ENCODE measurements at regions of chr5 and their contacts with region 1.

Region 1: DNA sequence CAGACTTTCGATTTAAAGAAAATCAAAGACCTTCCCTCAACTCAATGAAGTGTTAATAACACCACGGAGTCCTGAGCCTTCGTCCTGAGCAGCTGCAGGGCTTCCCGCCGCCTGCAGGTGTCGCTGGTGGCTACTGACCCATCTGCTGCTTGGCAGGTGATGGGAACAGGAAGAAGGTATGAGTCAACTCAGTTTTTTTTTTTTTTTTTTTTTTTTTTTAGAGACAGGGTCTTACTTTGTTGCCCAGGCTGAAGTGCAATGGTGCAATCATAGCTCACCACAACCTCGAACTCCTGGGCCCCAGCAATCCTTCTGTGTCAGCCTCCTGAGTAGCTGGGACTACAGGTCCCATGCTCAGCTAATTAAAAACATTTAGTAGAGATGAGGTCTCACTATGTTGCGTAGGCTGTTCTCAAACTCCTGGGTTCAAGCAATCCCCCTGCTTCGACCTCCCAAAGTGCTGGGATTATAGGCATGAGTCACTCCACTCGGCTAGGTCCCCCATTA is 185.7 kb upstream of the IL12B start:
- DNase-seq: peak; percentile 52 to 83 (median 78)
- ATAC-seq: peak; percentile 29 to 77
- H3K4me3 ChIP-seq: no peak overlapping the region
- H3K27ac ChIP-seq: no peak overlapping the region
- H3K4me1 ChIP-seq: peaks cover 2% of the 10 kb centered on the region
- H3K27me3 ChIP-seq: no peaks in the 10 kb centered on the region

Region 2: DNA sequence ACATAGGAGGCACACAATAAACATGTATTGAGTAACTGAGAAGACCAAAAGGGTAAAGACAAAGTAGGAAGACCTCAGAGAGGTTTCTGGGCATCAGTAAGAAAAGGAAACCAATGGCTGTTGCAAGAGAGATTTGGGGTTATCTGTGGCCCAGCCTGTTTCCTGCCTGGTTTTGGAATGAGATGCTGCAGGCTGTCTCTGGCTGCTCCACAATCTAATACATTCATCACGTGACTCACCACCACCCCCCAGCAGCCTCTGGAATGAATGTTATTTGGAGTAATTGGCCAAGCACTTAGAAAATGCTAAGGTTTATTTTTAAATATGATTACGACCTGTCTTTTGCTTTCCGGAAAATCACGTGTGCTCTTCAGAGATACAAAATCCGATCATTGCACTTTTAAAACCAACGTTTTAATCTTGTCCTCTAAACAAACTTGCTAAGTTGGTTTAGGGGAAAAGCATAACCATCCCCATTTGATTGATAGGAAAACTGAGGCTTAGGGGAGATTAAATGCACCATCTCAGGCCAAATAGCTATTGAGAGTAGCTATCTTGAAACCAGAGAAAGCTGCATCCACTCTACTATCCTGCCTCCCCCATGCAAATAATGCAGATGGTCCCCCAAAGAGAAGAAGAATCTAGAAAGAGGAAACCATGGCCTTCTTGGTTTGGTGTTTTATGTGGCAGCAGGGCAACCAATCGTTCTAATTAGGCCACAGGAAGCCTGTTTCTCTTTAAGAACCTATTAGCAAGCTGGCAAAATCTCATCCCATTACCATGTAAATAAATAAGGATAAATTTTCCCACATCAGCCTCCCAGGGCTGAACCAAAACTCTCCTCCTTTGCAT is 248.5 kb after region 1 on chr5:
- intact Hi-C with region 1: loop called in 1 of 4 experiments (anchors 10 kb)
- DNase-seq: peak in 1 of 3 donors; percentile 56
- ATAC-seq: peak; percentile 79 to 84
- H3K4me3 ChIP-seq: no peak overlapping the region
- H3K27ac ChIP-seq: no peak overlapping the region
- H3K4me1 ChIP-seq: no peaks in the 10 kb centered on the region
- H3K27me3 ChIP-seq: no peaks in the 10 kb centered on the region

Region 3: DNA sequence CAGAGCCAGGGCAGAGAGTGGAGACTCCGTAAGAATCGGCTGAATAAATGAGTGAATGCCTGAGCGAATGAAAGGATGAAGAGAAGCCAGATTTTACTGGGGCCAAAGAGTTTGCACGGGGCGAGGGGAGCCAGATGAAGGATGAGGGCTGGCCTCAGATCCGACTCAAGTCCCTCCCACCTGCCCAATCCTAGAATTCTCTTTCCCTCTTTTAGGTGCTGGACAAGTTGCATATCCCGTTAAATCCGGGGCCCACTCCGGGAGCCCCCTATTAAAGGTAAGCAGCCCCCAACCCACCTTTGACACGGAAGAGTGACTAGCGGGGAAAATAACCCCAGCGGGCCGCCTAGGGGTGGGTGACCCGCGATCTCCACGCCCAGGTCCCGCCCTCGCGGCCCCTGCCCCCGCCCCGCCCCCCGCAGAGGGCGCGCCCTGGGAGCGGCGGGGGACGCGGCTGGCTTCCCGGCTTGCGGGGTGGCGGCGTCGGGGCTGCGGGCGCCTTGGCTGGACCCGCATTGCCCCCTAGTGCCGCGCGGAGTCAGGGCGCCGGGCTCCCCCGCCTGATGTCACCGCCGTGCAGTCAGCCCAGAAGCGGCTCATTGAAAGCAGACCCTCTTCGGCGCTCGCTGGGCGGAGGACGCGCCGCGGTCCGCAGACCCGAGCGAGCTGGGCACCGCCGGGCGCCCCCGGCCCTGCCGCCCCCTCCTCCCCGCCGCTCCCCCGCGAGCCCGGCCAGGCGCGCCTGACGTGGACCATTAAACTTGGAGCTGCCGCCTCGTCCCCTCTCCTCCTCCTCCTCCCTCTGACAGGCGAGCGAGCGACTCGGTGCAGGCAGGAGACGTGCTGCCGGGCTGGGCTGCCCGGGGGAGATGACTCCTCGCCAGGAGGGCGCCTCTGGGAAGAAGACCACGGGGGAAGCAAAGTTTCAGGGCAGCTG is 400.2 kb after region 1 on chr5 and contains the start of gene ADRA1B:
- intact Hi-C with region 1: loop called in 1 of 4 experiments (anchors 5 kb)
- DNase-seq: peak; percentile 76 to 90 (median 90)
- ATAC-seq: peak; percentile 90 to 92
- H3K4me3 ChIP-seq: peak within 1 kb of the TSS; percentile 69
- H3K27ac ChIP-seq: no peak within 1 kb of the TSS
- H3K4me1 ChIP-seq: no peaks in the 10 kb centered on the region
- H3K27me3 ChIP-seq: no peaks in the 10 kb centered on the region
- total RNA-seq, gene ADRA1B: 2.0 to 3.6 (median 2.5) TPM

Region 4: GRCh38 chr5:159965031-159965837 is 449.3 kb after region 1 on chr5:
- intact Hi-C with region 1: loop called in 2 of 4 experiments (anchors 10 kb)
- DNase-seq: peak; percentile 67 to 87 (median 81)
- ATAC-seq: peak; percentile 79 to 81
- H3K4me3 ChIP-seq: no peak overlapping the region
- H3K27ac ChIP-seq: no peak overlapping the region
- H3K4me1 ChIP-seq: no peaks in the 10 kb centered on the region
- H3K27me3 ChIP-seq: no peaks in the 10 kb centered on the region

Region 5: GRCh38 chr5:159975462-159976019 is 459.6 kb after region 1 on chr5:
- intact Hi-C with region 1: loop called in 1 of 4 experiments (anchors 10 kb)
- DNase-seq: peak in 2 of 3 donors; percentile 24 to 56
- ATAC-seq: peak; percentile 76 to 89
- H3K4me3 ChIP-seq: no peak overlapping the region
- H3K27ac ChIP-seq: no peak overlapping the region
- H3K4me1 ChIP-seq: no peaks in the 10 kb centered on the region
- H3K27me3 ChIP-seq: no peaks in the 10 kb centered on the region

Measured in right cardiac atrium (tissue), 5 donors.